Panc1 (cell line): ENCODE measurements at regions of chr2 and their contacts with region 1.

Region 1: GRCh38 chr2:203261326-203262159 is 22.7 kb downstream of the CYP20A1 start:
- DNase-seq: no peak
- ATAC-seq: no peak; the same call in 1 of the 2 replicates
- H3K4me3 ChIP-seq: no peak overlapping the region
- H3K27ac ChIP-seq: no peak overlapping the region
- H3K4me1 ChIP-seq: no peaks in the 10 kb centered on the region
- H3K27me3 ChIP-seq: no peaks in the 10 kb centered on the region
- CTCF ChIP-seq: no peak

Region 2: DNA sequence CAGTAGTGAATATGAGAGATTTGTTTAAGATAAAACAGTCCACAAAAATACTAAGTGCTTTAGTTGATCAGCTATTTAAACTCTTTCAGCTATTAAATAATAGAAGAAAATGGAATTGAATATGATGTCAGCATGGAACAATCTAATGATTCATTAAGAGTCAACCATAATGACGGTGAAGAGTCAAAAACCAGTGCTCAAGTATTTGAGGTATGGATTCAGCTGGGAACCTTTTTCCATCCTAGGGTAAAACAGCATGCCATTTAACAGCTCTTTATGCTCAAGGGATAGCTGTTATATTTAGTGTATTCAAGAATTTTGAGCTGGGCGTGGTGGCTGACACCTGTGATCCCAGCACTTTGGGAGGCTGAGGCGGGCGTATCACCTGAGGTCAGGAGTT is 319.8 kb before region 1 on chr2:
- CTCF ChIA-PET with region 1: no interaction called
- POLR2A ChIA-PET with region 1: no interaction called
- in situ Hi-C with region 1: no loop called
- intact Hi-C with region 1: no loop called
- DNase-seq: no peak
- ATAC-seq: no peak
- H3K4me3 ChIP-seq: no peak overlapping the region
- H3K27ac ChIP-seq: no peak overlapping the region
- H3K4me1 ChIP-seq: no peaks in the 10 kb centered on the region
- H3K27me3 ChIP-seq: no peaks in the 10 kb centered on the region
- CTCF ChIP-seq: no peak

Region 3: DNA sequence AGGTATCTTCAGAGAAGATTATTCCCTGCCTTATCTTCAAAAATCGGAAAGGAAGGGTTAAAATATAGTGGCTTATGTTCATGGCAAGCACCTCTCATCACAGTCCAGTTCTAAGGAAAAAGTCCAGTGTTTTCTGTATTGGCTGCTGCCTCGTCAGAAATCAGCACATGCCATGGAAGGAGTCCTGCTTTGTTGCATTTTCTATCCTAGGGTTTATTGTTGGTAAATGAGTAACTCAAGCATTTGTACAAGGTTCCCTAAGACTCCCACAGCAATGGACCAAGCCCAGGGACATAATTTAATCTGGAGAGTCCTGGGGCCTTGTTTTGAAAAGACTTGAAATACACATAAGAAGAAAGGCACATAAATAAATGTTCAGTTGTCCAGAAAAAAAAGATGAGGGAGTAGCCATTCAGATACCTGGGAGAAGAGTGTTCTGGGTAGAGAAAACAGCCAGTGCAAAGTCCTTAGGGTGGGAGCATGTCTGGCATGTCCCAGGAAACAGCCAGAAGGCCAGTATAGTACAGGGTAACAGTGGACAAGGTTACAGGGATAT is 220.5 kb before region 1 on chr2:
- CTCF ChIA-PET with region 1: no interaction called
- POLR2A ChIA-PET with region 1: no interaction called
- in situ Hi-C with region 1: no loop called
- intact Hi-C with region 1: no loop called
- DNase-seq: no peak
- ATAC-seq: no peak
- H3K4me3 ChIP-seq: no peak overlapping the region
- H3K27ac ChIP-seq: no peak overlapping the region
- H3K4me1 ChIP-seq: no peaks in the 10 kb centered on the region
- H3K27me3 ChIP-seq: no peaks in the 10 kb centered on the region
- CTCF ChIP-seq: no peak

Region 4: GRCh38 chr2:203280428-203281064 is 19.0 kb after region 1 on chr2:
- CTCF ChIA-PET with region 1: no interaction called
- POLR2A ChIA-PET with region 1: interaction called, 13 read pairs
- in situ Hi-C with region 1: no loop called
- intact Hi-C with region 1: no loop called
- DNase-seq: peak; percentile 10
- ATAC-seq: peak; percentile 45; the same call in 1 of the 2 replicates
- H3K4me3 ChIP-seq: no peak overlapping the region
- H3K27ac ChIP-seq: no peak overlapping the region
- H3K4me1 ChIP-seq: peaks cover 8% of the 10 kb centered on the region; the same call in 1 of the 2 replicates
- H3K27me3 ChIP-seq: no peaks in the 10 kb centered on the region
- CTCF ChIP-seq: no peak

Region 5: GRCh38 chr2:203583701-203584100 is 322.2 kb after region 1 on chr2:
- CTCF ChIA-PET with region 1: no interaction called
- POLR2A ChIA-PET with region 1: no interaction called
- in situ Hi-C with region 1: no loop called
- intact Hi-C with region 1: no loop called
- DNase-seq: peak; percentile 33
- ATAC-seq: no peak
- H3K4me3 ChIP-seq: no peak overlapping the region
- H3K27ac ChIP-seq: no peak overlapping the region
- H3K4me1 ChIP-seq: no peaks in the 10 kb centered on the region
- H3K27me3 ChIP-seq: no peaks in the 10 kb centered on the region
- CTCF ChIP-seq: no peak

Region 6: GRCh38 chr2:203751685-203752271 is 490.2 kb after region 1 on chr2:
- CTCF ChIA-PET with region 1: no interaction called
- POLR2A ChIA-PET with region 1: no interaction called
- in situ Hi-C with region 1: no loop called
- intact Hi-C with region 1: no loop called
- DNase-seq: no peak
- ATAC-seq: no peak
- H3K4me3 ChIP-seq: no peak overlapping the region
- H3K27ac ChIP-seq: no peak overlapping the region
- H3K4me1 ChIP-seq: no peaks in the 10 kb centered on the region
- H3K27me3 ChIP-seq: no peaks in the 10 kb centered on the region
- CTCF ChIP-seq: no peak